ENCODE measurements at regions of chr1 and their contacts with region 1.

Region 1: GRCh38 chr1:37434292-37434907 is 40.0 kb upstream of the ZC3H12A start:
- DNase-seq: peak; percentile 47 to 76 (median 67)
- ATAC-seq: peak; percentile 85
- H3K4me3 ChIP-seq: no peak overlapping the region
- H3K4me3 Mint-ChIP-seq: no peak overlapping the region
- H3K27ac ChIP-seq: no peak overlapping the region
- H3K27ac Mint-ChIP-seq: no peak overlapping the region
- H3K4me1 ChIP-seq: no peaks in the 10 kb centered on the region
- H3K4me1 Mint-ChIP-seq: no peaks in the 10 kb centered on the region
- H3K27me3 ChIP-seq: no peaks in the 10 kb centered on the region
- H3K27me3 Mint-ChIP-seq: peaks cover 35% of the 10 kb centered on the region
- CTCF ChIP-seq: peak; percentile 65

Region 2: GRCh38 chr1:36516372-36517325 is 917.8 kb before region 1 on chr1:
- CTCF ChIA-PET with region 1: interaction called, 18 read pairs
- POLR2A ChIA-PET with region 1: no interaction called
- intact Hi-C with region 1: loop called in 1 of 2 experiments (anchors 2 kb)
- DNase-seq: peak in 7 of 9 experiments; percentile 6 to 62 (median 35)
- ATAC-seq: peak; percentile 42
- H3K4me3 ChIP-seq: no peak overlapping the region
- H3K4me3 Mint-ChIP-seq: no peak overlapping the region
- H3K27ac ChIP-seq: no peak overlapping the region
- H3K27ac Mint-ChIP-seq: no peak overlapping the region
- H3K4me1 ChIP-seq: no peaks in the 10 kb centered on the region
- H3K4me1 Mint-ChIP-seq: no peaks in the 10 kb centered on the region
- H3K27me3 ChIP-seq: no peaks in the 10 kb centered on the region
- H3K27me3 Mint-ChIP-seq: peaks cover 3% of the 10 kb centered on the region
- CTCF ChIP-seq: peak; percentile 59

Region 3: DNA sequence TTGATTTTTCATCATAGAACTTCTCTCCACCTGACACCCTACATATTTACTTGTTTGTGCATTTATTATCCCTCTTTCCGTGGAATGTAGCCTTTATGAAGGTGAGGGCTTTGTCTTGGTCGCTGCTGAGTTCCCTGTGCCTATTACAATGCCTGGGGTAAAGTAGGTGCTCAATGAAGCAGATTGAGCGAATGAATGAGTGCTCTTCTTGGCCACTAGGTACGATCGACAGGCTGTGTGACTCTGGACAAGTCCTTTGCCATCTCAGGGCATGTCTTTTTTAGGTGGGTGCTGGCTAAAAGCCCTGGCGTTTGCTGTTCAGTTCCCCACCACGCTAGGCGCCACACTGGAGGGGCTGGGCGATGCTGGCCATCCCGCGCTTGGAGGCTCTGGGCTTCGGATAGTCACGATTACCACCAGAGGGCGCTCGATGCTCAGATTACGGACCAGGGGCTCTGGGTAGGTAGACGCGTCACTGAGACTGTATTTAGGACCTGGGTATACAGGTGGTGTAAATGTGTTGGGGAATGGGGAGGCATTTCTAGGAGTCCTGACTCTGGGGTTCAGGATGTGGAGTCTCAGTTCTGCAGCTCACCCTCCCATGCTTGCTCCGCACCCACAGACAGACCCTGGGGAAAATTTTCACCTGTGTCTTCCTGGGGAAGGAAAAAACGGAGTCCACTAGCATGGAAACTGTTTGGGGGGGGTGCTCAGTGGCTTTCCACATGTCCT is 880.6 kb before region 1 on chr1:
- CTCF ChIA-PET with region 1: interaction called, 3 read pairs
- POLR2A ChIA-PET with region 1: no interaction called
- intact Hi-C with region 1: loop called in 1 of 2 experiments (anchors 10 kb)
- DNase-seq: peak; percentile 28 to 72 (median 63)
- ATAC-seq: peak; percentile 46
- H3K4me3 ChIP-seq: no peak overlapping the region
- H3K4me3 Mint-ChIP-seq: no peak overlapping the region
- H3K27ac ChIP-seq: no peak overlapping the region
- H3K27ac Mint-ChIP-seq: no peak overlapping the region
- H3K4me1 ChIP-seq: no peaks in the 10 kb centered on the region
- H3K4me1 Mint-ChIP-seq: no peaks in the 10 kb centered on the region
- H3K27me3 ChIP-seq: peaks cover 0 to 6% of the 10 kb centered on the region in 2 experiments
- H3K27me3 Mint-ChIP-seq: peaks cover 51% of the 10 kb centered on the region
- CTCF ChIP-seq: peak; percentile 47

Region 4: DNA sequence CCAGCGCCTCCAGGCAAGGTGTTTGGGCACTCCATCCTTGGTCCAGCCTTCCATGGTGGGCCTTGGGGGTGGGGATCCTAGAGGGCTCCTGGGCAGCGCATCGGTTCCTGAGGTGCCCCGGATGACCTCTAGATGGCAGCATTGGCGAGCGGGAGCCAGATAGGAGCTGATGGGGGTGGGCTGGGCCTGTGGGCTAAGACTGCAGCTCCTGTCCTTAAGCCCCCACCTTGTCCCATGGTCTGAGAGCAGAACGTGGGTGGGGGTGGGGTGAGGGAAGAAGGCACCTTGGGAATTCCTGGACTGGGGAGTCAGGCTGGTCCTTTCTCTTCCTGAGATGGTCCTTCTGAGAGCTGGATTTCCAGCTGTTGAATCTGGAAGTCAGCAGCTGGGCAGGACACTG is 858.3 kb before region 1 on chr1:
- CTCF ChIA-PET with region 1: interaction called, 17 read pairs
- POLR2A ChIA-PET with region 1: no interaction called
- intact Hi-C with region 1: no loop called
- DNase-seq: peak; percentile 9 to 64 (median 42)
- ATAC-seq: no peak
- H3K4me3 ChIP-seq: no peak overlapping the region
- H3K4me3 Mint-ChIP-seq: no peak overlapping the region
- H3K27ac ChIP-seq: no peak overlapping the region
- H3K27ac Mint-ChIP-seq: no peak overlapping the region
- H3K4me1 ChIP-seq: no peaks in the 10 kb centered on the region
- H3K4me1 Mint-ChIP-seq: no peaks in the 10 kb centered on the region
- H3K27me3 ChIP-seq: peaks cover 0 to 2% of the 10 kb centered on the region in 2 experiments
- H3K27me3 Mint-ChIP-seq: peaks cover 37% of the 10 kb centered on the region
- CTCF ChIP-seq: peak; percentile 70

Region 5: GRCh38 chr1:36703526-36704208 is 730.7 kb before region 1 on chr1:
- CTCF ChIA-PET with region 1: no interaction called
- POLR2A ChIA-PET with region 1: no interaction called
- intact Hi-C with region 1: loop called in 1 of 2 experiments (anchors 10 kb)
- DNase-seq: peak in 8 of 9 experiments; percentile 14 to 61 (median 40)
- ATAC-seq: no peak
- H3K4me3 ChIP-seq: no peak overlapping the region
- H3K4me3 Mint-ChIP-seq: no peak overlapping the region
- H3K27ac ChIP-seq: no peak overlapping the region
- H3K27ac Mint-ChIP-seq: no peak overlapping the region
- H3K4me1 ChIP-seq: no peaks in the 10 kb centered on the region
- H3K4me1 Mint-ChIP-seq: no peaks in the 10 kb centered on the region
- H3K27me3 ChIP-seq: no peaks in the 10 kb centered on the region
- H3K27me3 Mint-ChIP-seq: peaks cover 32% of the 10 kb centered on the region
- CTCF ChIP-seq: peak; percentile 49

Region 6: DNA sequence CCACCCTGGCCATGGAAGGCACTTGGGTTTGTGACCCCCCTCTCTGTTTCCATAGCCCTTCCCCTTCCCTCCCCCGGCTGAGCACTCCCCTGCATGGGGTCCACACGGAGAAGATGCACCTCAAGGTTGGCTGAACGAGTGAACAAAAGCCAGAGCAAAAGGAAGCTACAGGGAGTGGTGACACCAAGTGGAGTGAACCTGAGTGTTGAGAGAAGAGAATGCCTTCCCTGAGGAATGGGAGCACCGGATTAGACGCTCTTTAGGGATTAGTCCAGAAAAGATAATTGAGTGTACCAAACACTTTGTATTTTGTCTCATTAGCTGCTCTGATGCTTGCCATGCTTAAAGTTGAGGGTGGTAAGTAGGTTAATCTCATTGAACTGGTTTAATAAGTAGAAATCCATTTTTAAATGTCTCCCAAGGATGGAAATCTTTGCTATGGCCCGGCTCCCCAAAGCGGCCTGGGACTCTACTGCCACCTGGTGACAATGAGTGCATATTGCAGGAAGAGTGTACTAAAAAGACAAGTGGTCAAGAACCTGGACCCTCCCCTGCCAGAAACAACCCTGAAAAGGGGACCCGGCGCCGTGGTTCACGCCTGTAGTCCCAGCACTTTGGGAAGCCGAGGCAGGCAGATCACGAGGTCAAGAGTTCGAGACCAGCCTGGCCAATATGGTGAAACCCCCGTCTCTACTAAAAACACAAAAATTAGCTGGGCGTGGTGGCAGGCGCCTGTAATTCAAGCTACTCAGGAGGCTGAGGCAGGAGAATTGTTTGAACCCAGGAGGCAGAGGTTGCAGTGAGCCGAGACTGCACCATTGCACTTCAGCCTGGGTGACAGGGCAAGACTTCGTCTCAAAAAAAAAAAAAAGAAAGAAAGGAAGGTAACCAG is 110.7 kb before region 1 on chr1:
- CTCF ChIA-PET with region 1: no interaction called
- POLR2A ChIA-PET with region 1: no interaction called
- intact Hi-C with region 1: no loop called
- DNase-seq: peak in 2 of 9 experiments; percentile 17 to 24
- ATAC-seq: no peak
- H3K4me3 ChIP-seq: no peak overlapping the region
- H3K4me3 Mint-ChIP-seq: no peak overlapping the region
- H3K27ac ChIP-seq: no peak overlapping the region
- H3K27ac Mint-ChIP-seq: no peak overlapping the region
- H3K4me1 ChIP-seq: no peaks in the 10 kb centered on the region
- H3K4me1 Mint-ChIP-seq: no peaks in the 10 kb centered on the region
- H3K27me3 ChIP-seq: peaks cover 3 to 7% of the 10 kb centered on the region in 2 experiments
- H3K27me3 Mint-ChIP-seq: peaks cover 35% of the 10 kb centered on the region
- CTCF ChIP-seq: peak; percentile 19

Region 7: DNA sequence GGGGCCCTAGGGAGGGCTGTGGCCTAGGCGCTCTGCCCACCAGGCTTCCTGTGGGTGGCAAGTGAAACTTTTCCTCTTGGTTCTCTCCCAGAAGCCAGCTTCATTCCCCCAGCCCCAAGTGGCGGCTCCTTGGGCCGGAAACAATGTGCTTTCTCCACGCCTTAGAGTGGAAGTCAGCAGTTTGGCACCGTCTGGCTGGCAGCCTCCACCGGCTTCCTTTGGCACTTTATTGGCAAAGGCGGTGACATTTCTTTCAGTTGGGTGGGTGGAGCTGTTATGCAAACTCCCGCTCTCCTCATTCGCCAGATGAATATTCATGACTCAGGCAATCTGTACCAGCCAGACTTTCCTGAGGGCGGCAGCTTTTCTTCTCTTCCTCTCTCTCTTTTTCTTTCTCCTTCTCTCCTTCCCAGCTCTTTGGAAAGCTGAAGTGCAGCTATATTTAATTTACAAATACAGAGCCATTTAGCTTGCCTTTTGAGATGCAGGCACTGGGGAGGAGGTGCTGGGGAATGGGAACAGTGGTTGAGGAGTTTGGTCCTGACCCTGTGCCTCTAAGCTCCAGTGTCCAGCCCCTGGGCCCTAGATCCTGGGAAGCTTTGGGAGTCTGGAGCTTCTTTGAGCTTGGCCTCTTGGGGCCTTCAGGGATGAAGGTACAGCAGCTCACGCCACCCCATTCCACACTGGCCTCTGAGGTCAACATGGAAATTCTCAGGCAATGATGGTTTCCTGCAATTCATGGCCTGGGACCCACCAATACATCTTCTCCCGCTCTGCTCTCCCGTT is 680.0 kb after region 1 on chr1:
- CTCF ChIA-PET with region 1: no interaction called
- POLR2A ChIA-PET with region 1: no interaction called
- intact Hi-C with region 1: loop called in 1 of 2 experiments (anchors 5 kb)
- DNase-seq: no peak
- ATAC-seq: no peak
- H3K4me3 ChIP-seq: no peak overlapping the region
- H3K4me3 Mint-ChIP-seq: no peak overlapping the region
- H3K27ac ChIP-seq: no peak overlapping the region
- H3K27ac Mint-ChIP-seq: no peak overlapping the region
- H3K4me1 ChIP-seq: no peaks in the 10 kb centered on the region
- H3K4me1 Mint-ChIP-seq: no peaks in the 10 kb centered on the region
- H3K27me3 ChIP-seq: no peaks in the 10 kb centered on the region
- H3K27me3 Mint-ChIP-seq: peaks cover 2% of the 10 kb centered on the region
- CTCF ChIP-seq: no peak